Heart right ventricle (tissue), 16 donors: ENCODE measurements at regions of chr9 and their contacts with region 1.

Region 1: GRCh38 chr9:90102292-90102901 is 497.6 kb downstream of the GADD45G start:
- DNase-seq: peak; percentile 68 to 82
- ATAC-seq: peak; percentile 74 to 88 (median 84)
- H3K4me3 ChIP-seq: no peak overlapping the region
- H3K27ac ChIP-seq: no peak overlapping the region
- H3K4me1 ChIP-seq: peaks cover 2 to 32% (median 15%) of the 10 kb centered on the region in 9 donors
- H3K27me3 ChIP-seq: no peaks in the 10 kb centered on the region
- CTCF ChIP-seq: peak; percentile 43 to 89 (median 77)

Region 2: GRCh38 chr9:89675058-89675742 is 427.2 kb before region 1 on chr9:
- intact Hi-C with region 1: loop called in 1 of 10 experiments (anchors 10 kb)
- DNase-seq: peak; percentile 62 to 70
- ATAC-seq: peak; percentile 74 to 88 (median 86)
- H3K4me3 ChIP-seq: no peak overlapping the region
- H3K27ac ChIP-seq: peak overlapping the region in 8 of 10 donors; percentile 15 to 79 (median 49)
- H3K4me1 ChIP-seq: peaks cover 0 to 34% (median 20%) of the 10 kb centered on the region in 9 donors
- H3K27me3 ChIP-seq: no peaks in the 10 kb centered on the region
- CTCF ChIP-seq: no peak

Region 3: DNA sequence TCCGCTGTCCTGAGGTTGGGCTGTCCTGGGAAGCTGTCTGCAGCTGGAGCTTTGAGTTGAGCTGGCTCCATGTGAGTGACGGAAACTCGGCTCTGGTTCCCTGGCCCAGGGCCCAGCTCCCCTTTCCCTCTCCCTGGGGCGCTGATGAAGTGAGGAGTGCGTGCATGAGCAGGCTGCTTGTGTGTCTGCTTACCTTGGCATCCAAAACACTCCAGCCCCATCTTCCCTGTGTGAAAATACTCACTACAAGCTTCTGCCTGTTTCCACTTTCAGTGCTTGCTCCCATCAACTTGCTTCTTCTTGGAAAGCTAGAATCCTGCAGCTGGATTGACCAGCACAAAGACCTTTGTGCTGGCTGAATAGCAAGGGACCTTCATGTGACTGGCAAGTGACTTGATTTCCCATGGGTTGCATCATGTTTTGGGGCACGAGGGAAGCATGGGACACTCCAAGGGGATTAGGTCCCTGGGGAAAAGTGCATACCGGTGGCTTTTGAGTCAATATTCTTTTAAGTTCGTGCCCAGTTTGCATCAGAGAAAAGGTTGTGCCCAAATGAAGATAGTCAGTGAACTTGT is 299.5 kb before region 1 on chr9:
- intact Hi-C with region 1: loop called in 1 of 10 experiments (anchors 5 kb)
- DNase-seq: peak; percentile 75
- ATAC-seq: peak; percentile 75 to 94 (median 90)
- H3K4me3 ChIP-seq: no peak overlapping the region
- H3K27ac ChIP-seq: peak overlapping the region in 1 of 10 donors; percentile 22
- H3K4me1 ChIP-seq: peaks cover 3 to 40% (median 22%) of the 10 kb centered on the region in 9 donors
- H3K27me3 ChIP-seq: no peaks in the 10 kb centered on the region
- CTCF ChIP-seq: no peak

Region 4: DNA sequence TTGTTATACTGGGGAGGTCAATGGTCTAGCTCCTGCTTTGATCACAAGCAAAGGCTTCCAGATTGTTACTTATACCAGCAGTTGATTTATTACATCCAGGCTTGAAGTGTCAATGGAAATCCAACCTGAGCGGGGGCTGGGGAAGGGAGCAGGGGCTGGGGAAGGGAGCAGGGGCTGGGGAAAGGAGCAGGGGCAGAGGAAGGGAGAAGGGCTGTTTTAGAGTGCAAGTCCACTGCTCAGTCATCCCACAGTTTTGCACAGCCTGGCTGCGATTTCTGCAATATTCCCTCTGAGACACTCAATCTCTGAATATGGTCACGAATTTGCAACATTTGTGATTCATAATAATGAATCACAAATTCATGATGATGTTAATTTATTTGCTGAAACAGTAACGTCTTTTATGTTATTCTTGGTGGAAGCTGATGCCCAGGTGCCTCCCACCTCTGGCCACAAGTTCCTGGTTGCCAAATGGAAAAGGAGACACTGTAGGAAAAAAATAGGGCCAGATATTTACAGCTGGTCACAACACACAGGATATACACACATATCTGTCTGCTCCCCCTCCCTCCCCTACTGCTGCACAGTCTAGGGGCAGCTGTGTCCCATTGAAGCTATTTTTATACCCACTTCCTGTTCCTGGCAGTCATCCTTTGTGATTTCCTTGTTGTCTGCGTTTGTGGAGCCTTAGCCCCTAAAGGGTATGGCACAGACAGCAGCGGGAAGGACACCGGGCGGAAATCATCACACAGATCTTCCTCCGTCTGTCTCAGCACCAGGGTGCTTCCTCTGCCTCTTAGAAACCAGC is 172.5 kb before region 1 on chr9:
- intact Hi-C with region 1: loop called in 7 of 10 experiments (anchors 5 to 10 kb)
- DNase-seq: peak in 1 of 2 donors; percentile 30
- ATAC-seq: peak; percentile 63 to 90 (median 80)
- H3K4me3 ChIP-seq: no peak overlapping the region
- H3K27ac ChIP-seq: peak overlapping the region in 3 of 10 donors; percentile 15 to 25 (median 18)
- H3K4me1 ChIP-seq: peaks cover 3 to 31% (median 23%) of the 10 kb centered on the region in 9 donors
- H3K27me3 ChIP-seq: no peaks in the 10 kb centered on the region
- CTCF ChIP-seq: no peak